ENCODE measurements at regions of chr10 and their contacts with region 1.

Region 1: DNA sequence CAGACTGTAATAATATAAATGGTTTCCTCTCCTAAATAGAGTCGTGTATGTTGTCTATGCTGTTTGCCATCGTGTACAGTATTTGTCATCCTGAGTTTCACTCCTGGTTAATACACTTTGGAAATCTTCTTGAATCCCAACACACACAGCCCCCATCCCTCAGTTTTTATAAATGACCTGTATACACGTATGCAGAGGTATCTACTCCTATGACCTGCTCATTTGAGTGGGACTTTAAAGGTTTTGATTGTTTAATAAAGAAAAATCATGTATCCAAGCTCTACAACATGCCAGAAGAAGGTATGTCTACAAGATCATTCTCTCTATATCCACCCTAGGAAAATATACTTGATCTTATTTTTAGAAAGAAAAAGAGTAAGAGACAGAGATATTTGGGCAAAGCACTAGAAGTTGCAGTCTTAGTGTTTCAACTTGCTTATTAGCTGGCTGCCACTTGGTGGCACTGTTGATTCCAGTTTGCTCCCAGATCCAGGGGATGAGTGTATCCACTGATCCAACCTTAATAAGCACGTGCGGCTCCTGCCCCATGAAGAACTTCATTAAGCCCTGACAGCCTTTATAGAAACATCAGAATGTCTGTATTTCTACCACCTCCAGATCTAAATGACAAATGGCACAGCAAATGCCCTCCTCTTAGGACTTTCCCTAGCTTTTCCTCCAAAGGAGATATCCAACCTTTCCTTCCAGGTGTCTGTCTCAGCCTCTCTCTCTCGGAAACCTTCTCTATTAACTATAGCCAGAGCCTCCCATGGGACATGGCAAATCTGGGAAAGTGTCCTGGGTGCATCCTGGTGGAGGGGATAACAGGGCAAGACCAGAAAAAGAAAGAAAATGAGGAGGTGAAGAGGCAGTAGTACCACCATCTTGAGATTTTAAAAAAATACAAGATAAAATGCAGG is 181.6 kb upstream of the NEBL start:
- DNase-seq: peak in 4 of 5 donors; percentile 62 to 67 (median 65)
- ATAC-seq: peak; percentile 73 to 91 (median 79)
- H3K4me3 ChIP-seq: no peak overlapping the region
- H3K27ac ChIP-seq: peak overlapping the region in 6 of 12 donors; percentile 9 to 68 (median 49)
- H3K4me1 ChIP-seq: peaks cover 0 to 11% (median 0%) of the 10 kb centered on the region in 12 donors
- H3K27me3 ChIP-seq: no peaks in the 10 kb centered on the region
- CTCF ChIP-seq: peak; percentile 60 to 88 (median 77)
- POLR2A ChIP-seq: no peak

Region 2: GRCh38 chr10:20885678-20886077 is 193.0 kb before region 1 on chr10:
- intact Hi-C with region 1: loop called in 4 of 10 experiments (anchors 5 to 10 kb)
- DNase-seq: no peak
- ATAC-seq: peak; percentile 74 to 83 (median 83)
- H3K4me3 ChIP-seq: peak overlapping the region in 3 of 12 donors; percentile 2 to 21 (median 8)
- H3K27ac ChIP-seq: peak overlapping the region in 10 of 12 donors; percentile 48 to 76 (median 58)
- H3K4me1 ChIP-seq: peaks cover 0 to 33% (median 1%) of the 10 kb centered on the region in 12 donors
- H3K27me3 ChIP-seq: no peaks in the 10 kb centered on the region
- CTCF ChIP-seq: no peak
- POLR2A ChIP-seq: no peak

Region 3: GRCh38 chr10:20891338-20891714 is 187.3 kb before region 1 on chr10:
- intact Hi-C with region 1: loop called in 5 of 10 experiments (anchors 5 to 10 kb)
- DNase-seq: no peak
- ATAC-seq: peak; percentile 39 to 56 (median 48)
- H3K4me3 ChIP-seq: peak overlapping the region in 10 of 12 donors; percentile 6 to 67 (median 46)
- H3K27ac ChIP-seq: peak overlapping the region in 11 of 12 donors; percentile 35 to 95 (median 84)
- H3K4me1 ChIP-seq: peaks cover 0 to 19% (median 0%) of the 10 kb centered on the region in 12 donors
- H3K27me3 ChIP-seq: no peaks in the 10 kb centered on the region
- CTCF ChIP-seq: no peak
- POLR2A ChIP-seq: no peak

Region 4: DNA sequence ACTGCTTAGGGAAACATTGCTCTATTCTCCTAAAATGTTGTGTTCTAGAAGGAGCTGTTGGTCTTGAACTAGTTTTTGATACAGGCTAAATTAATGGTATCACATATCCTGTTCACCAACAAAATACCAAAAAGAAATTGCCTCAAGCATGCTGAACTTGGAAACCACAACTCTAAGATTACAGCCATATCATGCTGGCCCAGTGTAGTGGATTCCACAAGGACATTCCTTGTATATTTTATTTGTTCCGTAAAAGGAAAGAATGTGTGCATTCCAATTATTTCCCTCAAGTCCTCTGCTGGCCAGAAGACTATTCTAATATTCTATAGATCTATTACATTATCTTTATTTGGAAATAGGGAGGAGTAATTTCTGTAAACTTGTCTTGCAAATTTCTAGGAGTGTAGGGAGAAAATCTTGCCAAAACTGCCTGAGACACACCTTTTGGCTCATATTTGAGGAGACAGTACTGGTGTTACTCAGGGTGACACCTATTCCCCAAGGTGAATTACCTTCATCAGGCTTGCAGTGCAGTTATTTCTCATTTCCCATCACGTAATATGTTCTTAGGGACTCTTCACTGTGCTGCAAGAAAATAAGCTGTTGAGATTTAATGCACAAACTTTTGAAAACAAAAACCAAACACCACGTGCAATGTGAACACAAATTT is 179.7 kb before region 1 on chr10:
- intact Hi-C with region 1: loop called in 3 of 10 experiments (anchors 5 to 10 kb)
- DNase-seq: no peak
- ATAC-seq: no peak
- H3K4me3 ChIP-seq: no peak overlapping the region
- H3K27ac ChIP-seq: peak overlapping the region in 8 of 12 donors; percentile 18 to 95 (median 90)
- H3K4me1 ChIP-seq: peaks cover 0 to 12% (median 0%) of the 10 kb centered on the region in 12 donors
- H3K27me3 ChIP-seq: no peaks in the 10 kb centered on the region
- CTCF ChIP-seq: no peak
- POLR2A ChIP-seq: no peak

Region 5: GRCh38 chr10:21194464-21194993 is 115.9 kb after region 1 on chr10:
- intact Hi-C with region 1: no loop called
- DNase-seq: peak in 3 of 5 donors; percentile 16 to 28 (median 27)
- ATAC-seq: peak; percentile 69 to 80 (median 74)
- H3K4me3 ChIP-seq: no peak overlapping the region
- H3K27ac ChIP-seq: no peak overlapping the region
- H3K4me1 ChIP-seq: peaks cover 0 to 6% (median 0%) of the 10 kb centered on the region in 12 donors
- H3K27me3 ChIP-seq: no peaks in the 10 kb centered on the region
- CTCF ChIP-seq: no peak
- POLR2A ChIP-seq: no peak

Region 6: GRCh38 chr10:21265621-21266020 is 187.0 kb after region 1 on chr10:
- intact Hi-C with region 1: loop called (anchors 1 to 5 kb)
- DNase-seq: no peak
- ATAC-seq: no peak
- H3K4me3 ChIP-seq: no peak overlapping the region
- H3K27ac ChIP-seq: no peak overlapping the region
- H3K4me1 ChIP-seq: no peaks in the 10 kb centered on the region
- H3K27me3 ChIP-seq: no peaks in the 10 kb centered on the region
- CTCF ChIP-seq: no peak
- POLR2A ChIP-seq: no peak

Region 7: GRCh38 chr10:21273400-21273932 is 194.8 kb after region 1 on chr10:
- intact Hi-C with region 1: loop called (anchors 1 to 5 kb)
- DNase-seq: no peak
- ATAC-seq: peak in 2 of 4 donors; percentile 22 to 35
- H3K4me3 ChIP-seq: no peak overlapping the region
- H3K27ac ChIP-seq: no peak overlapping the region
- H3K4me1 ChIP-seq: peaks cover 0 to under 1% (median 0%) of the 10 kb centered on the region in 12 donors
- H3K27me3 ChIP-seq: no peaks in the 10 kb centered on the region
- CTCF ChIP-seq: no peak
- POLR2A ChIP-seq: no peak

Region 8: DNA sequence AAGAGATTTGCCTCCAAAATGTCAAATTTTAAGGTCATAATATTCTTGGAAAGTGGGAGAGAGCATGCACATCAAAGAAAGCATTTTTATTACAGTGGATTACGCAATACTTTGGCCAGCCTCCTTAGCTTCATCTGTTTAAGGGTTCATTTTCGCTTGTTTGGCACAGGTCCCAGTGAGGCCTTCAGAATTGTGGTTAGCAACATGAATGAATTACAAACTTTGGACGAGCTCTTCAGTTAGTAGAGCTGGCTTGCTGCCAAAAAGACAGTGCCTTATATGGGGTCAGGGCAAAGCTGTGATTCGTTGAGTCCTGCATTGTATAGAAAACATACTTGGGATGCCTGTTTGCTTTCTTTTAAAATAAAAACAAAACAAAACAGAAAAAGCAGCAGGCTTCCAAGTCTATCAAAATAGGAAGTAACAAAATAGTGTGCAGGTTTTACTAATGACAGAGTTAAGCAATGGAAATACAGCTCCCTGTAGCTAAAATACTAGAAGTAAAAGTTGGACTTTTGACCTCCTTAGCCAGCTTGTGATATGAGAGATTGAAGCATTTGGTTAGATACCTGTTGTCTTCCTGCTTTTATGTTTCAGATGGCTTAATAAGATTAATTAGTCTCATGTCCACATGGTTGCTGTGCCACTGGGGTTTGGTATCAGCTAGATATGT is 646.2 kb after region 1 on chr10:
- intact Hi-C with region 1: loop called in 3 of 10 experiments (anchors 10 kb)
- DNase-seq: peak; percentile 74 to 94 (median 92)
- ATAC-seq: peak; percentile 89 to 97 (median 95)
- H3K4me3 ChIP-seq: no peak overlapping the region
- H3K27ac ChIP-seq: no peak overlapping the region
- H3K4me1 ChIP-seq: peaks cover 0 to 29% (median 13%) of the 10 kb centered on the region in 12 donors
- H3K27me3 ChIP-seq: no peaks in the 10 kb centered on the region
- CTCF ChIP-seq: no peak
- POLR2A ChIP-seq: no peak

Measured in heart left ventricle (tissue), 16 donors.